ENCODE measurements at regions of chr1 and their contacts with region 1.

Region 1: GRCh38 chr1:25997828-25998761 is at the start of gene PAFAH2:
- DNase-seq: peak; percentile 97 to 98 (median 97)
- ATAC-seq: peak; percentile 98
- H3K4me3 ChIP-seq: peak within 1 kb of the TSS; percentile 44
- H3K4me1 ChIP-seq: peaks cover 8% of the 10 kb centered on the region
- CTCF ChIP-seq: peak; percentile 95
- total RNA-seq, gene PAFAH2: 25.8 to 51.8 (median 38.0) TPM

Region 2: DNA sequence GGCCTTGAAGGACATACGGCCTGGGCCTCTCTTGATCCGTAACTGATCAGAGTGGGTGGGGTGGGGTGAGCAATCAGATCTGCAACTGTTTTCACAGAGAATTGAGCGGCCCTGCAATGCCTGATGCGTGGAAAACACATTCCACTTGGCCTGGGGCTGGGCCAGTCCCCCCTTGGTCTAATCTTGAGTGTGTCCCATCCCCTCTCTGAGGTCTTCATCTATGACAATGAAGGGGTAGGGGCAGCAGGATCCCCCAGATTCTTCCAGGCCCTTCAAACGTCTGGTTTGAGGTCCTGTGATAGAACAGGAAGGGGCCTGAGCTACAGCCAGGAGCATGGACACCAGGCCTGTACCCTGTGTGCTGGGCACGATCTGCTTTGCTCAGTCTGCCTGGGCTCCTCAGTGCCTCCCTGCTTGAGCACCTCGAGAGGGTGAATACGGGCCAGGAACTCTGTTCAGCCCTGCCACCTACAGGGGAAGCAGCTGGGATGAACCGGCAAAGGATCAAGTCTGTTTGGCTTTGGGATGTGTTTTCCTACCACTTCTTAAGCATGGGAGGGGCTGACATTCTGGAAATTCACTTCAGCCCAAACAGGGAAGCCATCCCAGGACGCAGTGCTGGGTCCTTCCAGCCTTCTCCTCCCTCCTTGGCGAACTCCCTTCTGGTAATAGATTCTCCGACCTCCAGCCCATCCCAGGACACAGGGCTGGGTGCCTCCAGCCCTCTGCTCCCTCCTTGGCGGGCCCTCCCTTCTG is 254.1 kb before region 1 on chr1:
- intact Hi-C with region 1: no loop called
- DNase-seq: peak; percentile 59 to 70 (median 66)
- ATAC-seq: peak; percentile 80
- H3K4me3 ChIP-seq: no peak overlapping the region
- H3K4me1 ChIP-seq: peaks cover 6% of the 10 kb centered on the region
- CTCF ChIP-seq: peak; percentile 14

Region 3: GRCh38 chr1:25895365-25895993 is 102.6 kb before region 1 on chr1:
- intact Hi-C with region 1: loop called (anchors 5 kb)
- DNase-seq: peak; percentile 88 to 92 (median 90)
- ATAC-seq: peak; percentile 95
- H3K4me3 ChIP-seq: no peak overlapping the region
- H3K4me1 ChIP-seq: peaks cover 6% of the 10 kb centered on the region
- CTCF ChIP-seq: peak; percentile 94